ENCODE measurements at regions of chr13 and their contacts with region 1.

Region 1: DNA sequence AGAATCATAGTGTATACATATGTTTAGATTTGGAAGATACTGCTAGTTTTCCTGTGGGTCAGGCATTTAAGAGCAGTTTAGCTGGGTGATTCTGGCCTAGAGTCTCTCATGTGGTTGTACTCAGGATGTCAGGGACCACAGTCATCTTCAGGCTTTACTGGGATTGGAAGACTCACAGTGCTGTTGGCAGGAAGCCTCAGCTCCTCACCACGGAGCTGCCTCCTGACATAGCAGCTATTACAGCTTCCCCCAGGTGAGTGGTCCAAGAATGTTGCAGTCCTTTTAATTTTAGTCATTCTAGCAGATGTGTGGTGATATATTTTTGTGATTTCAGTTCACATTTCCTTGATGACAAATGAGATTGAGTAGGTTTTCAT is 16.9 kb upstream of the GPR18 start:
- DNase-seq: peak in 8 of 9 experiments; percentile 22 to 83 (median 56)
- ATAC-seq: peak; percentile 63
- H3K4me3 ChIP-seq: no peak overlapping the region
- H3K4me3 Mint-ChIP-seq: peak overlapping the region; percentile 23
- H3K27ac ChIP-seq: peak overlapping the region in 1 of 2 experiments; percentile 34
- H3K27ac Mint-ChIP-seq: peak overlapping the region; percentile 86
- H3K4me1 ChIP-seq: peaks cover 86% of the 10 kb centered on the region
- H3K4me1 Mint-ChIP-seq: peaks cover 93% of the 10 kb centered on the region
- H3K27me3 ChIP-seq: no peaks in the 10 kb centered on the region
- H3K27me3 Mint-ChIP-seq: no peaks in the 10 kb centered on the region
- CTCF ChIP-seq: no peak

Region 2: DNA sequence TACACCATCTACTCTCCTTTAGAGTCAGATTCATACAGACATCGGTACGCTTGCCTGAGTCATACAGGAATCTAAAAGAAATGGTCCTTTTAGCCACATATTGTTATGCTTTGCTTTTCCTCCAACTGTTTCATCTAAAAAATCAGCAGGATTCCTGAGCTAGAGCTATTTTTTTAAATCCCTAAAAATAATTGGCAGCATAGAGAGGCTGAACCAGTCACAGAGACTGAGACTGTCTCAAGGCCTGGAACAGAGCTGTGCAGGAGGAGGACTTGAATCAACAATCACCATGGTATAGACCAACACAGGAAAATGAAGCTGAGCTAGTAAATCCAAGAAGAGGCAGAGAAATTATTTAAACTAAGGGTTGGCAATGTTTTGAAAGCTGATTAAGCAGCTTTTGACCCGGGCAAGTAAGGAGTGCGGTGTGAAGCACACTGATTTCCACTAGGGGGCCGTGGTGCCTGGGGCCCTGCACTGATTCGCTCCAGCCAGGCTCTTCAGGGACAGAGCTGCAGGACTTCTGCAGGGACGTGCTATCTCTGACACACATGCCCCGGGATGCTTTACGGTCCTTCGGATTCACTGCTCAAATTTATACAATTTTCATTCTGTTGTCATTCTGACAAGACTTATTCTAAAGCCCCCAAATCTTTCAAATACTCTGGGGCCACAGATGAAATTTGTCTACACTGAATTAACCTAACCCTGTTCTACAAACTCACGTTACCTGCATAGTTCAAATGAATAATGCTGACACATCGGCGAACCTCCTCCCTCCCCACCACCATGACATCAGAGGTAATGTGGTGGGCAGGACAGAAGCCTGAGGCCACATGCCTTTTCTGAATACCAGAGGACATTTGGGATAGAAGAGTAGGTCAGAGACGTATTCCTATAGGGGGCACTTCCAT is 435.0 kb before region 1 on chr13:
- CTCF ChIA-PET with region 1: no interaction called
- POLR2A ChIA-PET with region 1: no interaction called
- intact Hi-C with region 1: no loop called
- DNase-seq: peak in 7 of 9 experiments; percentile 11 to 55 (median 29)
- ATAC-seq: peak; percentile 55
- H3K4me3 ChIP-seq: no peak overlapping the region
- H3K4me3 Mint-ChIP-seq: no peak overlapping the region
- H3K27ac ChIP-seq: no peak overlapping the region
- H3K27ac Mint-ChIP-seq: no peak overlapping the region
- H3K4me1 ChIP-seq: no peaks in the 10 kb centered on the region
- H3K4me1 Mint-ChIP-seq: no peaks in the 10 kb centered on the region
- H3K27me3 ChIP-seq: no peaks in the 10 kb centered on the region
- H3K27me3 Mint-ChIP-seq: no peaks in the 10 kb centered on the region
- CTCF ChIP-seq: peak; percentile 51

Region 3: GRCh38 chr13:98927951-98928927 is 346.8 kb before region 1 on chr13:
- CTCF ChIA-PET with region 1: no interaction called
- POLR2A ChIA-PET with region 1: no interaction called
- intact Hi-C with region 1: no loop called
- DNase-seq: no peak
- ATAC-seq: no peak
- H3K4me3 ChIP-seq: no peak overlapping the region
- H3K4me3 Mint-ChIP-seq: no peak overlapping the region
- H3K27ac ChIP-seq: no peak overlapping the region
- H3K27ac Mint-ChIP-seq: no peak overlapping the region
- H3K4me1 ChIP-seq: peaks cover 4% of the 10 kb centered on the region
- H3K4me1 Mint-ChIP-seq: peaks cover 13% of the 10 kb centered on the region
- H3K27me3 ChIP-seq: no peaks in the 10 kb centered on the region
- H3K27me3 Mint-ChIP-seq: no peaks in the 10 kb centered on the region
- CTCF ChIP-seq: no peak

Region 4: DNA sequence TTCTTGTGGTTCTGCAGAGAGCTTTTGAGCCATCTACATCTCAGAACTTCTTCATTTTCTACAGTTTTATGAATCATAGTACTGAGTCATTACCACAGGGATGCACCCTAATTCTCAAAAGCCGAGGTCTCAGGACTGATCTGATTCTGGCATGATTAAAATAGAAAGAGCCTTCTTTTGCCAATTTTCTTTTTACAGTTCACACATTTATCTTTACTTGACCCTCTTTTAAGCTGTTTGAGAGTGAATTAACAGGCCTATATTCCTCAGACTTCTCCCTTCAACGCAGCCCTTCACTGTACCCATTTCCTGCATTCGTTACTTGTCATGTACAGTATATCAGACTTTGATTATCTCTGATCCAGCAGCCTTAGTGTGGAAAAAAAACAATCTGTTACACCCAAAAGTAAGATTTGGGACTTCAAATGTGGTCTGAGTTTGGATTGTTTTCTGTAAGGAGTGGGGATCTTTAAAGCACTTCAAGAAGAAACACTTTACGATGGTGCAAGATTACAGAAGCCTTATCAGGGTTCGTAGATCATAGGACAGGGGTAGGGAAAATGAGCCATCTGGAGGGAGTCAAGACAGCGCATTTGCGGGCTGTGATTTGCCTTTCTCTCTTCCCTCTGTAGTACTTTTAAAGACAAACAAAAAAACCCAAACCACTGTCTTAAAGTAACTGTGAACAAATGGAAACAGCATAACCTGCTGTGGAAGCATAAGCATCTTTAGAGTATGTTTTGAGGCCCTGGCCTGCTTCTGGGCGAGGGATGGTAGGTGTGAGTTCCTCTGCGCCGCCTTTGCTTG is 47.4 kb after region 1 on chr13:
- CTCF ChIA-PET with region 1: interaction called, 5 read pairs
- POLR2A ChIA-PET with region 1: no interaction called
- intact Hi-C with region 1: loop called in 1 of 2 experiments (anchors 2 kb)
- DNase-seq: peak in 5 of 9 experiments; percentile 40 to 81 (median 46)
- ATAC-seq: peak; percentile 80
- H3K4me3 ChIP-seq: peak overlapping the region in 1 of 2 experiments; percentile 6
- H3K4me3 Mint-ChIP-seq: peak overlapping the region; percentile 57
- H3K27ac ChIP-seq: peak overlapping the region; percentile 22 to 56
- H3K27ac Mint-ChIP-seq: peak overlapping the region; percentile 92
- H3K4me1 ChIP-seq: peaks cover 56% of the 10 kb centered on the region
- H3K4me1 Mint-ChIP-seq: peaks cover 73% of the 10 kb centered on the region
- H3K27me3 ChIP-seq: no peaks in the 10 kb centered on the region
- H3K27me3 Mint-ChIP-seq: no peaks in the 10 kb centered on the region
- CTCF ChIP-seq: no peak

Region 5: DNA sequence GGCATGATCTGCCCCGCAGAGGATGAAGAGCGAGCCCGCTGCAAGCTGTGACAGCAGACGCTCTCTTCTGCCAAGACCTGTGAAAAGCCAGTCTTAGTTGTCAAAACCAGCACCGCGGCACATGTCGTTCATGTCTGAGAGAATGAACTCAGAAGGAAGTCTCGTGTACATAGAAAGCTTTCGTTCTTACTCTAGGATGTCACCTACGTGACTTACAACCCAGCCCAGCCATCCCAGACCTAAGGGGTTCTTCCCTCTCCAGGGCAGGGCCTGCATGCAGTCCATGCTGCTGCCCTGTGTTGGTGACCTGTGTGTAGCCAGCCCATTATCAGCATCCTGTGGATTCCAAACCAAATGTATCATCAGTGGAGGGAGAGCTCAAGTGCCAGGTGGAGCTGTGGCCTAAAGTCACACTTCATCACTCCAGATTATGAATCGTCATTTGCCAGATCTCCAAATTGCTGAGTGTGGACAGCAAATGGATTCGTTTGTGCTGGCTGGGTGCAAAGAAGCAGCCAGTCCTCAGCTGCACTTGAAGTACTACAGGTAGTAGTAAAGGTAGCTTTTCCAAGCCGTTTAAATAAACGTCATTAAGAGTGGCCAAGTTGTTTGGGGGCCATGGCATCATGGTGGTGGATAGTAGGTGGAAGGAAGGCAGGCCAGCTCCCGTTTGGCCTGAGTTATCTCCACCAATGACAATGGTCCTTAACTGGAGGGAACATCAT is 106.0 kb after region 1 on chr13:
- CTCF ChIA-PET with region 1: interaction called, 170 read pairs
- POLR2A ChIA-PET with region 1: interaction called, 7 read pairs
- intact Hi-C with region 1: no loop called
- DNase-seq: peak in 7 of 9 experiments; percentile 41 to 84 (median 75)
- ATAC-seq: peak; percentile 50
- H3K4me3 ChIP-seq: no peak overlapping the region
- H3K4me3 Mint-ChIP-seq: peak overlapping the region; percentile 53
- H3K27ac ChIP-seq: peak overlapping the region; percentile 42 to 72
- H3K27ac Mint-ChIP-seq: peak overlapping the region; percentile 98
- H3K4me1 ChIP-seq: peaks cover 79% of the 10 kb centered on the region
- H3K4me1 Mint-ChIP-seq: peaks cover 93% of the 10 kb centered on the region
- H3K27me3 ChIP-seq: no peaks in the 10 kb centered on the region
- H3K27me3 Mint-ChIP-seq: no peaks in the 10 kb centered on the region
- CTCF ChIP-seq: no peak

Region 6: DNA sequence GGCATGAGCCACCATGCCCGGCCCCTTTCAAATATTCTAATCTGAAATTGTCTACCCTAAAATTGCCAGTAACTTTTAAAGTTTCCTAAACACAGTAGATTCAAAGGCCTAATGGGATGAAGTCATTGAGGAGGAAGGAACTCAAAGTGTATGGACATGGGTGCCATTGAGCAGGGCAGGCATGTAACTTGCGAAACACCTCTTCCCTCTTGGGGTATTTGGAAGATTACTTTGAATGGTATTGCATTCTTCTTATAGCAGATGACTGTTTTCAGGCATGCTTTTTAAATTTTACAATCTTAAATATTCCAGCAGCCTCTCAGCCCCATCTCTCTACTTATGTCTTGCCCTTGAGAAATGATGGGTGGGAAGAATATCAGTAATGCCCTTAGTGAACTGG is 247.2 kb after region 1 on chr13:
- CTCF ChIA-PET with region 1: no interaction called
- POLR2A ChIA-PET with region 1: no interaction called
- intact Hi-C with region 1: no loop called
- DNase-seq: no peak
- ATAC-seq: no peak
- H3K4me3 ChIP-seq: no peak overlapping the region
- H3K4me3 Mint-ChIP-seq: no peak overlapping the region
- H3K27ac ChIP-seq: no peak overlapping the region
- H3K27ac Mint-ChIP-seq: no peak overlapping the region
- H3K4me1 ChIP-seq: peaks cover 12% of the 10 kb centered on the region
- H3K4me1 Mint-ChIP-seq: peaks cover 34% of the 10 kb centered on the region
- H3K27me3 ChIP-seq: no peaks in the 10 kb centered on the region
- H3K27me3 Mint-ChIP-seq: no peaks in the 10 kb centered on the region
- CTCF ChIP-seq: no peak

Measured in CD8-positive, alpha-beta T cell (primary cell).